T-cell (primary cell): ENCODE measurements at regions of chr2 and their contacts with region 1.

Region 1: DNA sequence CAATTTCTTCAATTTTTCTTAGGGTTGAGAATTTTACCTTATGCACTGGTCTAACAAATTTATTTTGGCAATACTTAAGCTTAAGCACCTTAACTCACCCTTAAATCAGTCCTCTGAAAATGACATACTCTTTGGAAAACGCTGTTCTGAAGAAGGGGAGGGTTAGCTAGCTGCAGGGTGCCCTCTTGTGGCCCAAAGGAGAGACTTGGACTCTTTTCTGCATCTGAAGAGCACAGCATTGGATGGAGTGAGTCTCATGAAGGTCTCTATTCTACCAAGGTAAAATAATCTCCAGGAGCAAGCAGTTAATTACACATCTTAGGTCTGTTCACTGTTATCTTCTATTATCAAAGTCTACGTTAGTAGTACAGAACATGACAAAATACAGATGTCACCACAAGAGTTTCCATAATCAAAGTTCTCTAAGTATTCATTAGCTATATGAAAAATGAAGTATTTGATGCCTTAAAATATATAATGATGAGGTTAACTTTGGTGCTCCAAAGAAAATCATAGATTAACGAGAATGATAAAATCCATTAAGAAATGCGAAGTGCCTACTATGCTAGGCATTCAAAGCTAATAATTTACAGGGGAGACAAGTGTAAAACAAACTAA is 24.4 kb downstream of the PUM2 start:
- DNase-seq: peak in 31 of 35 experiments; percentile 13 to 70 (median 43)
- ATAC-seq: peak; percentile 69 to 88 (median 84)
- H3K4me3 ChIP-seq: no peak overlapping the region
- H3K4me3 Mint-ChIP-seq: peak overlapping the region in 1 of 3 donors; percentile 2
- H3K27ac ChIP-seq: no peak overlapping the region
- H3K27ac Mint-ChIP-seq: peak overlapping the region in 1 of 2 donors; percentile 16
- H3K4me1 ChIP-seq: peaks cover 5 to 16% of the 10 kb centered on the region in 2 experiments
- H3K4me1 Mint-ChIP-seq: peaks cover 85 to 92% (median 86%) of the 10 kb centered on the region in 3 donors
- H3K27me3 ChIP-seq: no peaks in the 10 kb centered on the region
- H3K27me3 Mint-ChIP-seq: no peaks in the 10 kb centered on the region

Region 2: DNA sequence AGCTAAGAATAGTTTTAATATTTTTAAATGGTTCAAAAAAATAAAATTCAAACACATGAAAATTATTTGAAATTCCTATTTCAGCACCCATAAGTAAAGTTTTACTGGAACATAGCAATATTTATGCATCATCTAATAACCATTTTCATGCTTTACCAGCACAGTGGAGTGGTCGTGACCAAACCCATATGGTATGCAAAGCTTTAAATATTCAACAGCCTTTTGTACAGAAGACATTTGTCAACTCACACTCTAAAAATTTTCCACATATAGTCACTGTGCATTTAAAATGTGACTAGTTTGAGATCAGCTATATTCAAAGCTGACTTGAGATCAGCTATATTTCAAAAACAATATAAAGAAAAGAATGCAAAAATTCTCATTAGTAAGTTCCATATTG is 21.9 kb before region 1 on chr2:
- CTCF ChIA-PET with region 1: interaction called, 3 to 10 read pairs
- POLR2A ChIA-PET with region 1: interaction called in 1 of 2 experiments, 8 read pairs
- DNase-seq: no peak
- ATAC-seq: no peak
- H3K4me3 ChIP-seq: no peak overlapping the region
- H3K4me3 Mint-ChIP-seq: no peak overlapping the region
- H3K27ac ChIP-seq: no peak overlapping the region
- H3K27ac Mint-ChIP-seq: no peak overlapping the region
- H3K4me1 ChIP-seq: no peaks in the 10 kb centered on the region
- H3K4me1 Mint-ChIP-seq: peaks cover 17 to 27% (median 18%) of the 10 kb centered on the region in 3 donors
- H3K27me3 ChIP-seq: no peaks in the 10 kb centered on the region
- H3K27me3 Mint-ChIP-seq: no peaks in the 10 kb centered on the region

Region 3: GRCh38 chr2:20343128-20343527 is 16.9 kb after region 1 on chr2:
- CTCF ChIA-PET with region 1: interaction called, 4 to 11 read pairs
- POLR2A ChIA-PET with region 1: interaction called in 1 of 2 experiments, 5 read pairs
- DNase-seq: no peak
- ATAC-seq: peak in 2 of 4 experiments; percentile 45 to 50
- H3K4me3 ChIP-seq: no peak overlapping the region
- H3K4me3 Mint-ChIP-seq: no peak overlapping the region
- H3K27ac ChIP-seq: no peak overlapping the region
- H3K27ac Mint-ChIP-seq: no peak overlapping the region
- H3K4me1 ChIP-seq: peaks cover 49 to 53% of the 10 kb centered on the region in 2 experiments
- H3K4me1 Mint-ChIP-seq: peaks cover 87 to 88% (median 88%) of the 10 kb centered on the region in 3 donors
- H3K27me3 ChIP-seq: no peaks in the 10 kb centered on the region
- H3K27me3 Mint-ChIP-seq: no peaks in the 10 kb centered on the region

Region 4: DNA sequence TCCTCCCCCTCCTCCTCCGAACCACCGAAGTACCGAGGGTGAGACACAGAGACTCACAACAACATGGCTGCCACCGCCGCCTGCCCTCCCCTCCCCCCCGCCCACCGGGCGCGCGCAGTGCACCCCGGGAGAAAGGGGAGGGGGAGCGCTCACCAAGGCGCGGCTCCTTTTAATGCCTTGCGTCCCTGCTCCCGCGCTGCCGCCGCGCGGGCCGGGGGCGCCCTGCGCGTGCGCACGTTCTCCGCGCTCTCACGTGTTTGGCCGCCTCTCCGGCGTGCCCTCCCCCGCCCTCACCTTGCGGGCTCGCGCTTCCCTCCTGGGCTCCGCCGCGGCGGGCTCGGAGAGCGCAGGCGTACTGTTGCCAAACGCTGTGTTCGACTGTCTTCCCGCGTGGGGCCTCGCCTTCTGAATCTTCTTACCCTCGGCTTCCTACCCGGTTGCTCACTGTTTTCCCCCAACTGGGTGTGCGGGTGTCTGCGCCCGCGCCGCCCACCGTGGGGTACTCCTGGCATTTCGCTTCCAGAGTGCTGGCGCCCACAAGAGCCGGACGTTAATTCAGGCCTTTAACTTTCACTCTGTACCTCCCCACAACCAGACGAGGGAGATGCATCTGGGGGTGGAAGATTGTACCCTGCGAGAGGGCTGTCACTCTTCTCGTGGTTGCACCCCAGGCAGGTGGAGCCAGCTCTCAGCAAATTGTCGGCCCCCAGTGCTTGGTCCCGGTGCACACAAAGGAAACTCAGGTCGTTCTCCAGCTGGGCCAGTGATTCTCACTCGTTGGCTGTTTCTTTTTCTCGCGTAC is 24.7 kb after region 1 on chr2 and contains the start of gene PUM2:
- CTCF ChIA-PET with region 1: interaction called, 3 to 12 read pairs
- POLR2A ChIA-PET with region 1: interaction called in 1 of 2 experiments, 7 read pairs
- DNase-seq: peak; percentile 91 to 99 (median 95)
- ATAC-seq: peak; percentile 79 to 90 (median 82)
- H3K4me3 ChIP-seq: peak within 1 kb of the TSS; percentile 78 to 86
- H3K4me3 Mint-ChIP-seq: peak within 1 kb of the TSS in 2 of 3 donors; percentile 92 to 93
- H3K27ac ChIP-seq: peak within 1 kb of the TSS; percentile 84
- H3K27ac Mint-ChIP-seq: peak within 1 kb of the TSS; percentile 81 to 83
- H3K4me1 ChIP-seq: peaks cover 38 to 43% of the 10 kb centered on the region in 2 experiments
- H3K4me1 Mint-ChIP-seq: peaks cover 38 to 43% (median 38%) of the 10 kb centered on the region in 3 donors
- H3K27me3 ChIP-seq: no peaks in the 10 kb centered on the region
- H3K27me3 Mint-ChIP-seq: no peaks in the 10 kb centered on the region
- total RNA-seq, gene PUM2: 128 to 154 (median 138) TPM